AG04449 (cell line): ENCODE measurements at regions of chr13 and their contacts with region 1.

Region 1: GRCh38 chr13:48571126-48571913 is 38.4 kb upstream of the RCBTB2 start:
- DNase-seq: peak; percentile 51
- H3K4me3 ChIP-seq: peak overlapping the region; percentile 24
- CTCF ChIP-seq: no peak

Region 2: DNA sequence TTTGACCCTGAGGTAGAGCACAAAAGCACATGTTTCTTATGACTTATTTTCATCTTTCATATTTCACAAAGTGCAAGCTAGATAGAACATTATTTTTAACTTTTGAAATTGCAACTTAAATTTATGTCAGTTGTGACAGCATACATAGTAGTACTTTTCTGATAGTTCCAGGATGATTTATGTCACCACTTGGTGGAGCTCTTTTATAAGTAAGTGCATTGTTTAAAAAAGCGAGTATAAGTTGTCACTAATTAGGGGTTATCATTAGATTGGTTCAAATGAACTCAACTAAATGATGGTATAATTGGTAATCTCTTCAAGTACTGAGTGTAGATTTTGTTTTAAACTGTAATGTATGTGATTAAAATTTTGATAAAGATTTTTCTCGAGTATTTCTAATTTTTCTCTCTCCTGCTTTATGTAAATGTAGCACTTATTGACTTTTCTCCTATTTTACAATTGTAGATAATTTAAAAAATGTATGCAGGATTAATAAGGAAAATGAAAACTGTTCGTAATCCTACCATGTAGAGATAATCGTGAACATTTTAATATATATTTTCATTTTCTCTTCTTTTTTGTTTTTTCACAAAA is 236.7 kb before region 1 on chr13:
- CTCF ChIA-PET with region 1: interaction called, 34 read pairs
- POLR2A ChIA-PET with region 1: no interaction called
- DNase-seq: no peak
- H3K4me3 ChIP-seq: no peak overlapping the region
- CTCF ChIP-seq: peak; percentile 6

Region 3: DNA sequence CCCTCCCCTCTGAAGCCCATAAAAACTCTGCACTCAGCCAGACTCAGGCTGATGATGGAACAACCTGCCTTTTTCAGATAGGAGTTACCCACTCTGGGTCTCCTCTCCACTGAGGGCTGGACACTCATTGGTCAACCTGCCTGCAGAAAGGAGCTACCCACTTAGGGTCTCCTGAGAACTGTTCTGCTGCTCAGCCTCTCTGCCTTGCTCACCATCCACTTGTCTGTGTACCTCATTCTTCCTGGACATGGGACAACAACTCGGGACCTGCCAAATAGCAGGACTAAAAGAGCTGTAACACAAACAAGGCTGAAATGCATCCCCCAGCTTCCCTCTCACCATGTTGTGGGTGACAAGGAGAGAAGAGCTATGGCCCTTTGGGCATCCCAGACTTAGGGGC is 20.0 kb before region 1 on chr13:
- CTCF ChIA-PET with region 1: no interaction called
- POLR2A ChIA-PET with region 1: no interaction called
- DNase-seq: no peak
- H3K4me3 ChIP-seq: no peak overlapping the region
- CTCF ChIP-seq: no peak